Ascending aorta (tissue), 2 donors: ENCODE measurements at regions of chr12 and their contacts with region 1.

Region 1: GRCh38 chr12:61654698-61655097 is 605.5 kb upstream of the USP15 start:
- DNase-seq: no peak
- H3K4me3 ChIP-seq: no peak overlapping the region
- H3K27ac ChIP-seq: no peak overlapping the region
- H3K4me1 ChIP-seq: no peaks in the 10 kb centered on the region
- H3K27me3 ChIP-seq: no peaks in the 10 kb centered on the region
- CTCF ChIP-seq: peak in 2 of 3 experiments; percentile 18 to 28

Region 2: GRCh38 chr12:61098031-61098580 is 556.6 kb before region 1 on chr12:
- intact Hi-C with region 1: no loop called
- DNase-seq: no peak
- H3K4me3 ChIP-seq: no peak overlapping the region
- H3K27ac ChIP-seq: no peak overlapping the region
- H3K4me1 ChIP-seq: no peaks in the 10 kb centered on the region
- H3K27me3 ChIP-seq: no peaks in the 10 kb centered on the region
- CTCF ChIP-seq: no peak

Region 3: GRCh38 chr12:61993734-61994345 is 339.1 kb after region 1 on chr12:
- intact Hi-C with region 1: loop called (anchors 10 kb)
- DNase-seq: no peak
- H3K4me3 ChIP-seq: no peak overlapping the region
- H3K27ac ChIP-seq: no peak overlapping the region
- H3K4me1 ChIP-seq: peaks cover 0 to 2% of the 10 kb centered on the region in 2 donors
- H3K27me3 ChIP-seq: no peaks in the 10 kb centered on the region
- CTCF ChIP-seq: peak; percentile 20 to 70 (median 67)

Region 4: GRCh38 chr12:62192180-62192902 is 537.6 kb after region 1 on chr12:
- intact Hi-C with region 1: loop called (anchors 10 kb)
- DNase-seq: peak in 1 of 2 donors; percentile 79
- H3K4me3 ChIP-seq: peak overlapping the region; percentile 62 to 70
- H3K27ac ChIP-seq: peak overlapping the region in 1 of 2 donors; percentile 28
- H3K4me1 ChIP-seq: peaks cover 8 to 14% of the 10 kb centered on the region in 2 donors
- H3K27me3 ChIP-seq: no peaks in the 10 kb centered on the region
- CTCF ChIP-seq: peak; percentile 51 to 78 (median 68)

Region 5: GRCh38 chr12:62841846-62842245 is 1187.1 kb after region 1 on chr12:
- intact Hi-C with region 1: no loop called
- DNase-seq: no peak
- H3K4me3 ChIP-seq: no peak overlapping the region
- H3K27ac ChIP-seq: peak overlapping the region; percentile 29 to 36
- H3K4me1 ChIP-seq: peaks cover 0 to 8% of the 10 kb centered on the region in 2 donors
- H3K27me3 ChIP-seq: no peaks in the 10 kb centered on the region
- CTCF ChIP-seq: no peak